ENCODE measurements at regions of chrX and their contacts with region 1.

Region 1: GRCh38 chrX:74382613-74383012 is 38.7 kb upstream of the SLC16A2 start:
- DNase-seq: peak; percentile 47 to 58
- H3K4me3 ChIP-seq: no peak overlapping the region
- H3K4me3 Mint-ChIP-seq: no peak overlapping the region
- H3K27ac Mint-ChIP-seq: no peak overlapping the region
- H3K4me1 ChIP-seq: no peaks in the 10 kb centered on the region
- H3K4me1 Mint-ChIP-seq: no peaks in the 10 kb centered on the region
- H3K27me3 ChIP-seq: no peaks in the 10 kb centered on the region
- H3K27me3 Mint-ChIP-seq: no peaks in the 10 kb centered on the region
- CTCF ChIP-seq: peak; percentile 53 to 71

Region 2: GRCh38 chrX:74458735-74459134 is 76.1 kb after region 1 on chrX:
- CTCF ChIA-PET with region 1: no interaction called
- POLR2A ChIA-PET with region 1: no interaction called
- intact Hi-C with region 1: loop called (anchors 1 kb)
- DNase-seq: no peak
- H3K4me3 ChIP-seq: no peak overlapping the region
- H3K4me3 Mint-ChIP-seq: no peak overlapping the region
- H3K27ac Mint-ChIP-seq: no peak overlapping the region
- H3K4me1 ChIP-seq: no peaks in the 10 kb centered on the region
- H3K4me1 Mint-ChIP-seq: no peaks in the 10 kb centered on the region
- H3K27me3 ChIP-seq: no peaks in the 10 kb centered on the region
- H3K27me3 Mint-ChIP-seq: peaks cover 12% of the 10 kb centered on the region
- CTCF ChIP-seq: no peak

Region 3: GRCh38 chrX:74536152-74536831 is 153.7 kb after region 1 on chrX:
- CTCF ChIA-PET with region 1: no interaction called
- POLR2A ChIA-PET with region 1: no interaction called
- intact Hi-C with region 1: loop called (anchors 5 kb)
- DNase-seq: peak; percentile 45 to 53
- H3K4me3 ChIP-seq: peak overlapping the region; percentile 42
- H3K4me3 Mint-ChIP-seq: peak overlapping the region; percentile 73
- H3K27ac Mint-ChIP-seq: no peak overlapping the region
- H3K4me1 ChIP-seq: no peaks in the 10 kb centered on the region
- H3K4me1 Mint-ChIP-seq: no peaks in the 10 kb centered on the region
- H3K27me3 ChIP-seq: no peaks in the 10 kb centered on the region
- H3K27me3 Mint-ChIP-seq: peaks cover 2% of the 10 kb centered on the region
- CTCF ChIP-seq: peak; percentile 15 to 34

Region 4: DNA sequence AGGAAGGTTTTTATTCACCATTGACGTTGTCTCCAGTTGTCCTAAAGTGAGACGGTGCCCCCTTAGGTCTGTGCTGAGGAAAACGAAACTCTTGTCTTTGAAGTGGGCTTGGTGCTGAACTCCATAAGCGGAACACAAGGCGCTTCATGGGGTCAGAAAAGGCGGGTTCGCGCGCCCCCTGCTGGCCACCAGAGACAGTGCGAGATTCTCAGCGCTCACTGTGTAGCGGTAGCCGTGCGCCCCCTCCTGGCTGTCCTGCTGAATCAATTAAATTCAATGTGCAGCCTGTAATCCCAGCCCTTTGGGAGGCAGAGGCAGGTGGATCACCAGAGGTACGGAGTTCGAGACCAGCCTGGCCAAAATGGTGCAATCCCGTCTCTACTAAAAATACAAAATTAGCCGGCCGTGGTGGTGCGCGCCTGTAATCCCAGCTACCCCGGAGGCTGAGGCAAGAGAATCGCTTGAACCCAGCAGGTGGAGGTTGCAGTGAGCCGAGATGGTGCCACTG is 167.7 kb after region 1 on chrX:
- CTCF ChIA-PET with region 1: no interaction called
- POLR2A ChIA-PET with region 1: no interaction called
- intact Hi-C with region 1: loop called (anchors 1 kb)
- DNase-seq: peak; percentile 63 to 80
- H3K4me3 ChIP-seq: no peak overlapping the region
- H3K4me3 Mint-ChIP-seq: no peak overlapping the region
- H3K27ac Mint-ChIP-seq: no peak overlapping the region
- H3K4me1 ChIP-seq: no peaks in the 10 kb centered on the region
- H3K4me1 Mint-ChIP-seq: no peaks in the 10 kb centered on the region
- H3K27me3 ChIP-seq: no peaks in the 10 kb centered on the region
- H3K27me3 Mint-ChIP-seq: no peaks in the 10 kb centered on the region
- CTCF ChIP-seq: peak; percentile 92 to 94

Measured in Caco-2 (cell line).